Sciatic nerve (tissue), 2 donors: ENCODE measurements at regions of chr21 and their contacts with region 1.

Region 1: GRCh38 chr21:38556406-38556805 is 58.1 kb upstream of the ERG start:
- DNase-seq: no peak
- ATAC-seq: no peak

Region 2: DNA sequence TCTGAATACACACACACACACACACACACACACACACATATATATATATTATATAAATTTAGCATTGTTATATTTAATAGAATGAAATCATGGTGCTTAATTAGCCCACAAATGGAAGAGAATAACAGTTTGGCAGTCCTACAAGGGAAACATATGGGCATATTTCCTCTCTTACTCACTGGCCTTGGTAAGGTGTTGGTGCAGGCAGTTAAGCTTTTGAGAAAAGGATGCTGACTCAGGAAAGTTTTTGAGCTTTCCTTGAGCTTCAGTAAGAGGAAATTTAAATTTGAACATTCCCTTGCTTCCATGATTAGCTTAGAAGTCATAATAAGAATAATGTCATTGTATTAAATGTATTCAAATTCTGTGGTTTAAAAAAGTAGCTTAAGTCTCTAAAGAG is 1019.4 kb after region 1 on chr21:
- intact Hi-C with region 1: loop called (anchors 10 kb)
- DNase-seq: no peak
- ATAC-seq: no peak